Activated CD4-positive, alpha-beta memory T cell treated with anti-CD3 and anti-CD28 coated beads for 36 hours (primary cell): ENCODE measurements at regions of chr3 and their contacts with region 1.

Region 1: DNA sequence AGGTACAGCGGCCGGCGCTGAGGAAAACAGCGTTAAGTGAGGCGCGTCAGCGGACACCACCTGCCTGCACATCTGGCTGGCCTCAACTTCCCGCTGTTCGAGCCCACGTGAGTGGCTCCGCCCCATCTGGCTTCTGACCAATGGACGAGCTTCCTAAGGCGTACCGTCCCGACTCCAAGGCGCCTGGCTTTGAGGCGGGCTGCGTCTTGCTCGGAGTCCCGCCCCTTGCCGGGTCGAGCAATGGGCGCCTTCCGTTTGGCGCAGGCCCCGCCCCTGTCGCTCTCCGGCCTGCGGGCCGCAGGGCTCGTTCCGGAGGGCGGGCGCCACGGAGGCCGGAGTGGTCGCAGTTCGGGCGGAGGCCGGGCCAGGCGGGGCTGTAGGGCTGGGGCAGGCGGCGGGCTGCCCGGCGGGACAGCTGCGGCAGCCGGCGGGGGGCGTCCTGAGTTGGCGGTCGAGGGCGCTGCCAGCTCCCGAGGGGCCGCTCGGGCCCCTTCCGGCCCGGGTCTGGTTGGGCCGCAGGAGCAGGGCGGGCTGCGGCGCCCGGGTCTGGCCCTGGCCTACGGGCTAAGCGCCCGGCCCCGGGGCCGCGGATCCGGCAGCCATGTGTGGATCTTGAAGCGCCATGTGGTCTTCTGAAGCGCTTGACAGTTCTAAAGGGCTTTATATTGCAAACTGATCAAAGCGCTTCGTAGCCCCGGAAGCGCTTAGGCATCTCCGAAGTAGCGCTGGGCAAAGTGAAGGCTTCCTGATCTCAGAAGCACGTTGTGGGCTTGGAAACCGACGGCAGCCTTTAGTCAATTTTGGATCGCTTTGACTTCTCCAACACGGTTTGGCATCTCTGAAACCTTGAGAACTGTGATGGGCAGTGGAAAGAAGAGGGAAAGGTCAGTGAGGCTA is at the start of gene TATDN2:
- DNase-seq: peak; percentile 97
- H3K4me3 Mint-ChIP-seq: peak within 1 kb of the TSS; percentile 97
- H3K27ac Mint-ChIP-seq: peak within 1 kb of the TSS; percentile 98
- H3K4me1 Mint-ChIP-seq: peaks cover 61% of the 10 kb centered on the region
- H3K27me3 Mint-ChIP-seq: no peaks in the 10 kb centered on the region
- total RNA-seq, gene TATDN2: 36.9 to 39.4 TPM

Region 2: GRCh38 chr3:9731206-9732079 is 517.0 kb before region 1 on chr3 and contains the start of gene BRPF1:
- CTCF ChIA-PET with region 1: no interaction called
- POLR2A ChIA-PET with region 1: no interaction called
- intact Hi-C with region 1: loop called (anchors 10 kb)
- DNase-seq: peak; percentile 100
- H3K4me3 Mint-ChIP-seq: peak within 1 kb of the TSS; percentile 88
- H3K27ac Mint-ChIP-seq: peak within 1 kb of the TSS; percentile 96
- H3K4me1 Mint-ChIP-seq: peaks cover 72% of the 10 kb centered on the region
- H3K27me3 Mint-ChIP-seq: no peaks in the 10 kb centered on the region
- total RNA-seq, gene BRPF1: 25.0 to 27.3 TPM

Region 3: DNA sequence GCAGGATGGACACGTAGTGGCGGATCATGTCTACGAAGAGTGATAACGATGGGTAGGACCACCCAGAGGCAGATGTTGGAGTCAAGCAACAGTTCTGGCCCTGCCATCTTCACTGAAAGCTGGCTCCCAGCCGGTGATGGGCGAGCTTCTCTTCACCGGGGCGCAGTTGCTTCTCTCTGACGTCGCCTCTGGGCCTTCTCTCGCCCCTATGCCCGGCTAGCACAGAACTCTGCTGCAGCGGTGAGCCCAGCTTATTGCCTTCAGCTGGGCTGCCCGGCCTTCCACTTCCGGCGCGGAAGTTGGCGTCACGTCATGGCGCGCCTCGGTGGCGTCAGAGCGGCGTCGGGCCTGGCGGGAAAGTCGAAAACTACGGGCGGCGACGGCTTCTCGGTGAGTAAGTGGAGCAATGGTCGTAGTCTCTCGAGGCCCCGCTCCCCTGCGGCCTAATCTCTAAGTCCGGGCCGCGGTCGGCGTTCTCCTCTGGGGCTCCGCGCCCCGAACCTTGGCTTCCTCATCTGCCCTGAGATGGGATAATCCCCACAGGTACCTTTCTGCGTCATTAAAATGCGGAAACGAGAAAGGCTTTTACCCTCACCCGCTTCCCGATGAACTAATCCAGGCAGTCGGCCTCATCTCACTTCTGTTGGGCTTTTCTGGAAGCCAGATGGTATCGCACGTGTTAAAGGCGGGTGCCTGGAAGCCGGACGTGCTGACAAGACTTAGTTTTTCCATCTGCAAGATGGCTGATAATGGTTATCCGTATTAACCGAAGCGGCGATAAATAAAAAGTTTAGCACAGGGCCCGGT is 222.1 kb before region 1 on chr3 and contains the start of gene FANCD2:
- CTCF ChIA-PET with region 1: no interaction called
- POLR2A ChIA-PET with region 1: no interaction called
- intact Hi-C with region 1: loop called (anchors 10 kb)
- DNase-seq: peak; percentile 96
- H3K4me3 Mint-ChIP-seq: peak within 1 kb of the TSS; percentile 97
- H3K27ac Mint-ChIP-seq: peak within 1 kb of the TSS; percentile 98
- H3K4me1 Mint-ChIP-seq: peaks cover 24% of the 10 kb centered on the region
- H3K27me3 Mint-ChIP-seq: no peaks in the 10 kb centered on the region
- total RNA-seq, gene FANCD2: 83.9 to 89.4 TPM

Region 4: GRCh38 chr3:10142707-10143566 is 105.5 kb before region 1 on chr3:
- CTCF ChIA-PET with region 1: no interaction called
- POLR2A ChIA-PET with region 1: interaction called, 5 read pairs
- intact Hi-C with region 1: loop called (anchors 2 kb)
- DNase-seq: peak; percentile 53
- H3K4me3 Mint-ChIP-seq: peak overlapping the region; percentile 96
- H3K27ac Mint-ChIP-seq: peak overlapping the region; percentile 83
- H3K4me1 Mint-ChIP-seq: peaks cover 27% of the 10 kb centered on the region
- H3K27me3 Mint-ChIP-seq: no peaks in the 10 kb centered on the region

Region 5: GRCh38 chr3:10198761-10199649 is 49.4 kb before region 1 on chr3:
- CTCF ChIA-PET with region 1: interaction called, 3 read pairs
- POLR2A ChIA-PET with region 1: interaction called, 3 read pairs
- intact Hi-C with region 1: loop called (anchors 1 kb)
- DNase-seq: peak; percentile 87
- H3K4me3 Mint-ChIP-seq: peak overlapping the region; percentile 27
- H3K27ac Mint-ChIP-seq: peak overlapping the region; percentile 98
- H3K4me1 Mint-ChIP-seq: peaks cover 74% of the 10 kb centered on the region
- H3K27me3 Mint-ChIP-seq: no peaks in the 10 kb centered on the region

Region 6: DNA sequence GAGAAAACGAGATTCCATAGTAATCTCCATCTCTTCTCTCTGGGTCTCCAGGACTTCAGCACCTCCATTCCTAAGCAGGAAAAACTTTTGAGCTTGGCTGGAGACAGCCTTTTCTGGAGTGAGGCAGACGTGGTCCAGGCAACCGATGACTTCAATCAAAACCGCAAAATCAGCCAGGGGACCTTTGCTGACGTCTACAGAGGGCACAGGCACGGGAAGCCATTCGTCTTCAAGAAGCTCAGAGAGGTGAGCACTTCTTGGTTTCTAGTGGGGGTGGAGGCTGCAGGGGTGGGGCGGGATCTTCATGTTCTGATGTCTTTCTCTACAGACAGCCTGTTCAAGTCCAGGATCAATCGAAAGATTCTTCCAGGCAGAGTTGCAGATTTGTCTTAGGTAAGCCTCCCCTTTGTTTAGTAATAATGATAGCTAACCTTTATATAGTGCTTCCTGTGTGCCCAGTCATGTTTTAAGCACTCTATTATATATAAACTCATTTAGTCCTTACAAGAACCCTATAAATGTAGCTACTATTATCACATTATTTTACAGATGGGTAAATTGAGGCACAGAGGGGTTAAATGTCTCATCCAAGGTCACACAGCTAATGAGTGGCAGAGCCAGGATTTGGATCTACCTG is 35.2 kb before region 1 on chr3:
- CTCF ChIA-PET with region 1: no interaction called
- POLR2A ChIA-PET with region 1: no interaction called
- intact Hi-C with region 1: no loop called
- DNase-seq: peak; percentile 54
- H3K4me3 Mint-ChIP-seq: no peak overlapping the region
- H3K27ac Mint-ChIP-seq: peak overlapping the region; percentile 74
- H3K4me1 Mint-ChIP-seq: peaks cover 6% of the 10 kb centered on the region
- H3K27me3 Mint-ChIP-seq: no peaks in the 10 kb centered on the region

Region 7: GRCh38 chr3:10263646-10264363 is 15.4 kb after region 1 on chr3:
- CTCF ChIA-PET with region 1: interaction called, 14 read pairs
- POLR2A ChIA-PET with region 1: interaction called, 9 read pairs
- intact Hi-C with region 1: loop called (anchors 1 kb)
- DNase-seq: peak; percentile 82
- H3K4me3 Mint-ChIP-seq: peak overlapping the region; percentile 71
- H3K27ac Mint-ChIP-seq: peak overlapping the region; percentile 83
- H3K4me1 Mint-ChIP-seq: peaks cover 85% of the 10 kb centered on the region
- H3K27me3 Mint-ChIP-seq: no peaks in the 10 kb centered on the region